ENCODE measurements at regions of chr20 and their contacts with region 1.

Region 1: DNA sequence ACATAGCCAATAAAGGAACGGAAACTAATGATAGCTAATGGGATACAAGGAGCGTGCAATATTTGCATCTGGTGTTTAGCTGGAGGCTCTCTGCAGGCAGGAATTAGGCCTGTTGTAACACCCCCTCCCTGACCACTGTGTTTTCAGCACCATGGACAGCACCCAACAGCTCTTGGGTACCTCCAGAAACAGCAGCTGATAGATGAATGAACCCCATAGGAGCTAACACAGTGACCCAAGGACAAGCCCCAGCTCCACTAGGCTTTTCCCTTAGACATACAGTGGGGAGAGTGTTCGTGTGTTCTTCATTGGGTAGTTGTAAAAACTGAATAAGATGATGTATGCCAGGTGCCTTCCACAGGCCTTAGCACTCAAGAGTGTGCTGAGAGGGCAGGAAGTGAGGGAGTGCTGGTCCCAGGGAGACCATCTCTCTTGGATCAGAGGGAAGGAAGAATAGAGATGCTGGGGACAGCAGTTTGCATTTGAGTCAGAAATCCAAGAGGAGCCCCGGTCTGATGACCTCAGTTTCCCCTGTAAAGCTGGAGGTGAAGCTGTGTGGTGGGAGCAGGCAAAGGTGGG is 161.3 kb downstream of the PHACTR3 start:
- DNase-seq: no peak
- ATAC-seq: no peak
- H3K4me3 ChIP-seq: no peak overlapping the region
- H3K27ac ChIP-seq: no peak overlapping the region
- H3K4me1 ChIP-seq: no peaks in the 10 kb centered on the region
- H3K27me3 ChIP-seq: peaks cover 0 to 16% of the 10 kb centered on the region in 2 donors
- CTCF ChIP-seq: no peak

Region 2: GRCh38 chr20:59705651-59706399 is 59.9 kb before region 1 on chr20:
- intact Hi-C with region 1: loop called in 1 of 2 experiments (anchors 10 kb)
- DNase-seq: peak in 2 of 4 donors; percentile 53 to 67
- ATAC-seq: no peak
- H3K4me3 ChIP-seq: no peak overlapping the region
- H3K27ac ChIP-seq: no peak overlapping the region
- H3K4me1 ChIP-seq: no peaks in the 10 kb centered on the region
- H3K27me3 ChIP-seq: peaks cover 0 to 59% of the 10 kb centered on the region in 2 donors
- CTCF ChIP-seq: no peak

Measured in left lung (tissue), 14 donors.